Mammary epithelial cell (primary cell): ENCODE measurements at regions of chr22 and their contacts with region 1.

Region 1: DNA sequence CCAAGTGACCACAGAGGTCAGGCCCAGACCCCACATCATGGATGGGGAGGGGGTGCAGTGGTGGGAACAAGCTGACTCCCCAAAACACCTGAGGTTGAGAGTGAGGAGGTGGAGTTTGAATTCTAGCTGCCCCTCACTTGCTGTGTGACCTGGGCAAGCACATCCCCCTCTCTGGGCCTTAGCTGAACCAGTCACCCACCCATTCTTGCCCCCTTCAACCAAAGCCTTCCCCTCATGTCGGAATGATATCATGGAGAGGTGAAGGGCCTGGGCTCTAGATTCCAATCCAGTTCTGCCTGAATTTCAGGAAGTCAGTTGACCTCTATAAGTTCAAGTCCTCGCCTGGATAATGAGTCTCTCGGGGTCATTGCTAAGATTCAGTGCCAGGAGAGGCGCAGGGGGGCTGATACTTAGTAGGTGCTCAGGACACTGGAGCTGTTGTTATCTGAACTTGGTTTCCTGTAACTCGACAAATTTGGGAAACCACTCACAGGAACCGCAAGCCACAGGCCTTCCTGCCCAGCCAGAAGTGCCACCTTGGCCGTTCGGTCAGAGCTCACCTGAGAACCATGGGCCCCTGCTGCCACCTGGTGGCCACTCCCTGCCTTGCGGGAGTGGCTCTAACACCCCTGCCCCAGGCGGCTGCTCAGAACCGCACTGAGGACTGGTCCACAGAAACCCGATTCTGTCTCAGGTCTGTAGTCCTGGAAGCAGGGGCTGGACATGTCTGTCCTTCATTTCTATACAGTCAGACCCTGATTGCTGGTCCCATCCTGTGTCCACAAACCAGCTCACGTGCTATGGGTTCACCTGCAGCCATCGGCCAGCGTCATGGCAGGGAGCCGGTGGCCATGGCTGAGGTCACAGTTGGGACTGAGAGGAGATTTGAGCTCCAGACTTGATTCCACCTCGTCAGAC is 6.9 kb downstream of the CDC42EP1 start:
- DNase-seq: peak; percentile 92
- H3K4me3 ChIP-seq: no peak overlapping the region
- H3K27ac ChIP-seq: peak overlapping the region; percentile 33
- H3K4me1 ChIP-seq: peaks cover 42% of the 10 kb centered on the region
- H3K27me3 ChIP-seq: no peaks in the 10 kb centered on the region
- CTCF ChIP-seq: peak; percentile 87 to 97

Region 2: GRCh38 chr22:37345863-37346504 is 221.2 kb before region 1 on chr22:
- CTCF ChIA-PET with region 1: no interaction called
- dilution Hi-C with region 1: no loop called
- in situ Hi-C with region 1: no loop called
- intact Hi-C with region 1: no loop called
- DNase-seq: peak; percentile 65
- H3K4me3 ChIP-seq: no peak overlapping the region
- H3K27ac ChIP-seq: no peak overlapping the region
- H3K4me1 ChIP-seq: peaks cover 12% of the 10 kb centered on the region
- H3K27me3 ChIP-seq: no peaks in the 10 kb centered on the region
- CTCF ChIP-seq: no peak

Region 3: DNA sequence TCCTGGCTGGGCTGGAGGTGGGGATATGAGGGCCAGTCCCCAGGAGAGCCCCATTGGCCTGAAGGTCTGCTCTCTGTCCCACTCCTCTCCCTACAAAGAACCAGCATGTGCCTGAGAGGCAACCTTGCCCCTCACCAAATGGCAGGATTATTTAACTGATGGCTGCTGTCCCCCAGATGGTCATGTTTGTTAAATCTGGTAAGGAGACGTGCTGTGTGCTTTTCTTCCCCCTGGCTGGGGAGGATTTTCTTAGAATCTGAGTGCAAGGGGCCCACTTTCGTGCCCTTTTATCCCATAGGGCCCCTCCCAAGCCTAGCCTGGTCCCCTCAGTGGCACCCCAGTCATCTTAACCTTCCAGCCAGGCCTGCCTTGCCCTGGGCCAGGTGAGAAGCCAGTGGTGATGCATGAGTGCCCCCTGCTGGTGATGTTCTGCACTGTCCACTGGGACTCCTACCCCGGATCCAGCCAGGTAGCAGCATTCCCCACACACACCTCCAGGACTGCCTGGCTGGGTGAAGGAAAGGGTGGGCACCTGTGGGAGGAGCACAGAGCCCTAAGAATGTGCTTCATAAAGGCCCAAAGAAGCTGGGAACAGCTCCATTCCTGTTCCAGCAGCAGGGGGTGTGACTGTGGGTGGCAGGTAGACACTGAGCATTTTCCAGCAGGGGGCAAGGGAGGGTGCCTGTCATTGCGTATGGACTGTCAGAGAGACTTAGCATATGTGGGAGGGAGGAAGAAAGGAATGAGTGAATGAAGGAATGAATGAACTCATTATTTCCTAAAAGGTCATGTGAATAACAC is 109.9 kb before region 1 on chr22:
- CTCF ChIA-PET with region 1: no interaction called
- dilution Hi-C with region 1: no loop called
- in situ Hi-C with region 1: no loop called
- intact Hi-C with region 1: loop called (anchors 1 kb)
- DNase-seq: peak; percentile 67
- H3K4me3 ChIP-seq: no peak overlapping the region
- H3K27ac ChIP-seq: no peak overlapping the region
- H3K4me1 ChIP-seq: peaks cover 21% of the 10 kb centered on the region
- H3K27me3 ChIP-seq: no peaks in the 10 kb centered on the region
- CTCF ChIP-seq: peak; percentile 97

Region 4: DNA sequence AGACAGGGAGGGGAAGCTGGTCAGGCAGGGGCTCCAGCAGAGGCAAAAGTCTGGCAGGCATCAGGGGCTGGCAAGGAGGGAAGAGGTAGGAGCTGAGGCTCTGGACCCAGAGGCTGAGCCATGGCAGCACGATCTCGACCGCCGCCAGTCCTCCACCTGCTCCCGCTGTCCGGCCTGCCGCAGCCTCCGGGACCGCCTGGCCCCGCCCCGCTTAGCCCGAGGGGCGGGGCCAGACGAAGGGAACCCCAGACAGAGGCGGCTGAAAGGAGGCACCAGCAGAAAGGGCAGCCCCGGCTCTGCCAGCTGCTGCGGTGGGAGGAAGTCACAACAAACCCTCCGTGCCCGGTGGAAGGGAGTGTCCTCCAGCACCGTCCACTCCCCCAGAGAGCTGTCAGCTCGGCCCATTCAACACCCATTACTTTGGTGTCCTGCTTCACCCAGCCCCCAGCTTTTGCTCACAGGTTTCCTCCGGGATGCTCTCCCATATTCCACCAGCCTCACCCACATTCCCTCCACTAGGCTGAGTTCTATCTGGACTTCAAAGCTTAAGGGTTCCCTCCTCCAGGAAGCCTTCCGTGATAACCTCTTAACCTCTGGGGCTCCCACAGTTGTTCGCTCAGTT is 80.8 kb before region 1 on chr22 and contains the start of gene MFNG:
- CTCF ChIA-PET with region 1: no interaction called
- dilution Hi-C with region 1: loop called (anchors 5 kb)
- in situ Hi-C with region 1: no loop called
- intact Hi-C with region 1: no loop called
- DNase-seq: peak; percentile 48
- H3K4me3 ChIP-seq: no peak within 1 kb of the TSS
- H3K27ac ChIP-seq: no peak within 1 kb of the TSS
- H3K4me1 ChIP-seq: peaks cover 3% of the 10 kb centered on the region
- H3K27me3 ChIP-seq: no peaks in the 10 kb centered on the region
- CTCF ChIP-seq: no peak
- total RNA-seq, gene MFNG: 3.5 to 48.9 TPM

Region 5: DNA sequence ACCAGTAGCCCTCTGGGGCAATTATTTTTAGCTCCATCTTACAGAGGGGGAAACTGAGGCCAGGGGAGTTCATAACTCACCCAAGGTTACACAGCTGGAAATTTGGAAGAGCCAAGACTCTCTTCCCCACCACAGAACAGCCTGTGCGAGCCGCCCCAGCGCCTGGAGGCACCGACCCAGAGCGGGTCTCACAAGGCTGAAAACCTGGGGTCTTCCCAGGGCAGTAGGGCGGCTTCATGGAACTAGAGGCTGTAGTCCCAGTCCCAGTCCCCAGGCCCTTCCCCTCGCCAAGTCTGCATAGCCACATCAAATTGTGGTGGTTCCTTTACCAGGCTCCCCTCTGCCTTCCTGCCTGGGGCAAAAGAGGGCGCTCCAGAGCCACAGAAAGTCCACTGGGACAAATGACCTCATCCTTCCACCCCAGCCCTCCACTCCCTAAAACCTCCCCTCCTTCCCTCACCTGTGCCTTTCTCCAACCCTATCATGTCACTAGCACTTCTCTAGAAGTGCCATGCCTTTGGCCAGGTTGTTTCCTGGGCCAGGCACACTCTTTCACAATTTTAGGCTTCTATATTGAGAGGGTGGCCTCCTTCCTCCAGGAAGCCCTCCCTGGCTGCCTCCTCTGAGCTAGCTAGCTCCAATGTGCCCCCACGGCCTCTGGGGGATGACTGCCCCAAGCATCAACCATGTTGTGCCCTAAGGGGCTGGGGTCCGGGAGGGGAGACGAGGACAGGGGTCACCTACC is 22.0 kb before region 1 on chr22:
- CTCF ChIA-PET with region 1: interaction called, 5 read pairs
- dilution Hi-C with region 1: no loop called
- in situ Hi-C with region 1: no loop called
- intact Hi-C with region 1: loop called (anchors 1 kb)
- DNase-seq: peak; percentile 80
- H3K4me3 ChIP-seq: no peak overlapping the region
- H3K27ac ChIP-seq: peak overlapping the region; percentile 66
- H3K4me1 ChIP-seq: peaks cover 51% of the 10 kb centered on the region
- H3K27me3 ChIP-seq: no peaks in the 10 kb centered on the region
- CTCF ChIP-seq: peak; percentile 79 to 83

Region 6: GRCh38 chr22:37594237-37594636 is 27.1 kb after region 1 on chr22:
- CTCF ChIA-PET with region 1: interaction called, 20 read pairs
- dilution Hi-C with region 1: no loop called
- in situ Hi-C with region 1: no loop called
- intact Hi-C with region 1: loop called (anchors 2 kb)
- DNase-seq: no peak
- H3K4me3 ChIP-seq: no peak overlapping the region
- H3K27ac ChIP-seq: no peak overlapping the region
- H3K4me1 ChIP-seq: no peaks in the 10 kb centered on the region
- H3K27me3 ChIP-seq: no peaks in the 10 kb centered on the region
- CTCF ChIP-seq: no peak

Region 7: DNA sequence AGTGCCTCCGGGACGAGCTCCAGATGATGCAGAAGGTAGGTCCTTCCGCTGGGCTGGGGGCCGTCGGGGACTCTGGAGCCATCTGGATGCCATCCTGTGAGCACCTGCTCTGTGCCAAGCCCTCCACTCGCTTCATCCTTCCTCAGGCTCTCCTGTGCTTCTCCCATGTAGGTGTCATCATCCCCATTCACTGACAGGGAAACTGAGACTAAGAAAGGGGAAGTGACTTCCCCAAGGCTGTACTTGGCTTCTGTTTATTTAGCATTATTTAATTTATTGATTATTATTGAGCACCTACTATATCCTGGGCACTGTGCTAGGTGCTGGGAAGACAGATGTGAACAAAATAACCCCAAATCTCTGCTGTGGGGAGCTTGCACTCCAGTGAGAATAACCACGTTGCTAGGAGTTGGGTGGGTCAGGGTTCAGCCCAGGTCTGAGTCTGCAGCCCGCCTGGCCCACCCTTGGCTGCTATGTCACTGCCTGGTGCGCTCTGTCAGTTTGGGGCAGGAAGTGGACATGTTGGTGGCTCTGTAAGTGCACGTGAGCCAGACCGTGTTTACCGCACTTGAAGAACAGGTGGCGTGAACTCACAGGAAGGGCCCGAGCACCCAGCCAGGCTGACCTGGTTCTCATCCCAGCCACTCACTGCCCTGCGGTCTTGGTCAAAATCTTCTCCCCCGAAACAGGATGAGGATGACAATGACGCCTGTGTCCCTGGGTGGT is 204.7 kb after region 1 on chr22:
- CTCF ChIA-PET with region 1: no interaction called
- dilution Hi-C with region 1: loop called (anchors 5 kb)
- in situ Hi-C with region 1: no loop called
- intact Hi-C with region 1: no loop called
- DNase-seq: no peak
- H3K4me3 ChIP-seq: no peak overlapping the region
- H3K27ac ChIP-seq: no peak overlapping the region
- H3K4me1 ChIP-seq: peaks cover 24% of the 10 kb centered on the region
- H3K27me3 ChIP-seq: no peaks in the 10 kb centered on the region
- CTCF ChIP-seq: no peak